PC-9 (cell line): ENCODE measurements at regions of chr2 and their contacts with region 1.

Region 1: DNA sequence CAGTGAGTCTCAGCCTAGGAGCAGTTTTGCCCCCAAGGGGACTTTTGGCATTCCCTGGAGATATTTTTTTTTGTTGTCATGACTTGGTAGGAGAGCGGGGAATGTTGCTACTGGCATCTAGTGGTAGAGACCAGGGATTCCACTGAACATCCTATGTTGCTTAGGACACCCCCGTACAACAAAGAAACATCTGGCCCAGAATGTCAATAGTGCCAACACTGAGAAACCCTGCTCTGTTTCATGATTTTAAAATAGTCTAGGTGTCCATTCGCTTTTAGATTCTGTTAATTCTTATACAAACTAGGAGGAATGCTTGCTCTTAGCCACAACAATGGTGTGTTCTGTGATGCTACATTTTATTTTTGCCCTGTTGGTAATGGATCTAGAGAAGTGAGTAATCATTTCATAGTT is 225.8 kb upstream of the SIX3 start:
- DNase-seq: peak; percentile 29 to 68
- H3K4me3 ChIP-seq: no peak overlapping the region
- H3K27ac ChIP-seq: no peak overlapping the region
- H3K4me1 ChIP-seq: no peaks in the 10 kb centered on the region
- H3K27me3 ChIP-seq: no peaks in the 10 kb centered on the region
- CTCF ChIP-seq: peak; percentile 73

Region 2: DNA sequence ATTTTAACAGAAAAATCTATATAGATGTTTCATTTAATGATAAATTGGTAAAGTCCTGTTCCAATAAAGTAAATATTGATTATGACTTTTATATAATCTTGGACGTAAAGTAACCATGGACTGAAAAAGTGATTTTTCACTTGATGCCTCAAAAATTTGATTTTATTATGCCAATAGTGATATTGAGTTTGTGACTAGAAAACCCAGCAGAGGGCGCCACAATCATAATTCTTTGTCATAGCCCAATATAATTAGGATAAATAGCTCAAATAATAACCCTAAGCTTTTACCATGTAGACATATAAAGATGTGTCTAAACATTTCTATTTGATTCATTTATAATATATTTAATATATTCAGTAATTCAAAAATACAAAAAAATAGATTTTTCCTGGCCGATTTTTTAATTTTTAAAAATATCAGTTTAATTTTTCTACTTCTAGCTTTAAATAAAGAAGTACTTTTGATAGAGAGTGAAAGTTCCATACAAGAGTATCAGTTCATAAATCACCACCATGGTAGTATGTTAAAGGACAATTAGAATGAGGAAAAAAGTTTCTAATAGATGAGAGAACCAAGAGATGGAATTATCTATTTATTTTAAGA is 323.2 kb before region 1 on chr2:
- CTCF ChIA-PET with region 1: interaction called, 3 read pairs
- POLR2A ChIA-PET with region 1: no interaction called
- intact Hi-C with region 1: loop called (anchors 10 kb)
- DNase-seq: peak in 1 of 2 experiments; percentile 46
- H3K4me3 ChIP-seq: no peak overlapping the region
- H3K27ac ChIP-seq: no peak overlapping the region
- H3K4me1 ChIP-seq: no peaks in the 10 kb centered on the region
- H3K27me3 ChIP-seq: no peaks in the 10 kb centered on the region
- CTCF ChIP-seq: peak; percentile 94

Region 3: DNA sequence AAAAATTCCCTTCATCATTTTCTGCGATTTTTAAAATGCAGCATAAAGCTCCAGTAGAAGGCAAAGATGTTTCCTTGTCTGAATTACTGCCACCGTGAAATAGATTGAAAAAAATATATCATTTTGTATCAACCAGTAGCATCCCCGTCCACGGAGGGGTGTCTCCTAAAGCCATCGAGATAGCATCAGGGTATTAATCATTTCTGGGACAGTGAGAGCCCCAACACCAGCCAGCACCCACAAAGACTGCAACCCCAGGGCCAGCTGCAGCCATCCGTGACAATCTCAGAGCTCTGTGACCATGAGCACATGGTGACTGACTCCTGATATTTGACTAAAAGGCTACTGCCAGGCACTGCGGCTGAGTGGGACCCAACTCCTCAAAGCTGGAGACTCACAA is 161.7 kb after region 1 on chr2:
- CTCF ChIA-PET with region 1: no interaction called
- POLR2A ChIA-PET with region 1: interaction called, 12 read pairs
- intact Hi-C with region 1: no loop called
- DNase-seq: no peak
- H3K4me3 ChIP-seq: no peak overlapping the region
- H3K27ac ChIP-seq: no peak overlapping the region
- H3K4me1 ChIP-seq: no peaks in the 10 kb centered on the region
- H3K27me3 ChIP-seq: no peaks in the 10 kb centered on the region
- CTCF ChIP-seq: no peak